Right ventricle myocardium inferior (tissue), 1 donor: ENCODE measurements at regions of chr2 and their contacts with region 1.

Region 1: DNA sequence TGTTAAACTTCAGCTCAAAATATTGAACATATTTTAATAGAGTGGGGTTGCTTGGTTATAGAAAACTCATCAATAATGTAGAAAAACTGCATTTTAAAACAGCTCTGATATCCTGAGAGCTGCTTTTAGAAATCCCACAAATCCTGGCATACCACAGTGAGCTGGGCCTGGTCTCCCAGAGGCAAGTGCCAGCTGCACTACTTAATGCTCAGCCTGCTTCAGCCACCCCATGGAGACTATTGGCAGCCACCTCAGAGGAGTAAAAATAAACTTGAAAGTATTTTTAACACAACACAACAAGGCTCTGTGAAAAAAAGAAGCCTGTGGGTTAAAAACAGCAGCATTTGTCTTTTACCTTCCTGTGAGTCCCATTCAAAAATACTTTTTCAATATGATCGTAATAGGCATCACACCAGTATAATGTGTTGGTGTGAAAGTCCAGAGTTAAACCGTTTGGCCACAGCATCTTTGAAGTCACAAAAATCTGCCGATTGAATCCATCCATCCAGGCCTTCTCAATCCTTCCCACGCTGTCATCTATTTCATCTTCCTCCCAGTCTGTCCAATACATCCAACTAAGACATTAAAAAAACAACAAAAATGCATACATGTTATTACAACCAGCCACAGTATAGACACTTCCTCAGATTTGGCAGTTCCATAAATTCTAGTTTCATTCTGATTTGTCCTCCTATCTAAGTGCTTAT is 1115.3 kb downstream of the LRP1B start:
- DNase-seq: peak; percentile 51
- ATAC-seq: peak; percentile 95

Region 2: GRCh38 chr2:140737006-140737405 is 278.5 kb before region 1 on chr2:
- intact Hi-C with region 1: no loop called
- DNase-seq: no peak
- ATAC-seq: no peak

Region 3: GRCh38 chr2:141207036-141207385 is 191.5 kb after region 1 on chr2:
- intact Hi-C with region 1: loop called (anchors 5 kb)
- DNase-seq: no peak
- ATAC-seq: peak; percentile 79

Region 4: DNA sequence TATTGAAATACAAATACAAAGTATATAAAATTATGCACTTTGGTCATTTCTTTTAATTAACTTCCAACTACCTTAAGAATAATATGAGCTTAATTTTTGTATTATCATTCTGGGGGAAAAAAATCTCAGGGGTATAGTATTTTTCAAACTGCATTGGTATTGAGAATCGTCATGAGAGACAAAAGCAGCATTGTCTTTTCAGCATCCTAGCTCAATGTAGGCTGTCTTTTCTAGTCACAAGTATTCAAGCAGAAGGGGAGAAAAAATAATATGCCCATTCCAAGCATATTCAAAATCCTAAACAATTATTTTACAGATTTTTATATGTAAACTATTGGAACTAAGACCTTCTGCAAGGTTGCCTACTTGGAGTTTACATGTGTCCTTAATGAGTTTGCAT is 422.0 kb after region 1 on chr2:
- intact Hi-C with region 1: no loop called
- DNase-seq: no peak
- ATAC-seq: no peak